ENCODE measurements at regions of chr20 and their contacts with region 1.

Region 1: DNA sequence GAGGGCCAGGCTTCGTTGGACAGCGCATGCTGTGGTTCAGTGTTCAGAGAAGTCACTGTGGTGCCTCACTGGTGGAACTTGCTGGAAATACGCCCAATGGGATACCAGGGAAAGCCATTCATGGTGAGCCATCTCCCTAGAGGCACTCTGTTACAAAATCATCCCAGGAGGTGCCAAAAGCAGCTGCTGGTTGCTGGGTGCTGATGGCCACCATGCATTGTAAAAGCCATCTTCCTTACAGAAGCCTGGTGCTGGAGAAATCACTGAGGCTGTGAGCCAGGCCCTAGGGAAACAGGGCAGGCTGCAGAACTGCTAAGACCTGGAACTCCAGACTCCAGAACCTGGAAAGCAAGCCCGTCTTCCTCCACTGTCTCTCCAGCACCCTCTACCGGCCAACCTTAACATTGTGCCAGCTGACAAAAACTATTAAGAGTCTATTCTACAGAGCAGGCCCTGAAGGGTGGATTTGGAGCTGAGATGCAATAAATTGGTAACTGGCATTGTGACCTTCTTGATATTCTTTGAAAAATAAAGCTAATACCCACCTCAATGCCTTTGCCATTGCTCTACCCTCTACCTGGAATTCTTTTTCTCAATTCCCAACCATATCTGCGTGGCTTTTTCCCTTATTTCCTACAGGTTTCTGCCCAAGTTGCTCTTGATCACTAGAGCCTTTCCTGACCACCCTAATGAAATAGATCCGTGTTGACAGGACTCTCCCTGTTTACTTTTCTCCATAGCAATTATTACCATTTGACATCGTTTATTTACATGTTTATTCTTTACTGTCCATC is 18.5 kb downstream of the SNRPB start:
- DNase-seq: peak; percentile 76 to 79 (median 78)
- ATAC-seq: peak; percentile 76
- H3K4me3 ChIP-seq: no peak overlapping the region
- H3K27ac ChIP-seq: no peak overlapping the region
- H3K4me1 ChIP-seq: no peaks in the 10 kb centered on the region
- H3K27me3 ChIP-seq: no peaks in the 10 kb centered on the region
- CTCF ChIP-seq: peak; percentile 71 to 83 (median 78)
- POLR2A ChIP-seq: no peak

Region 2: DNA sequence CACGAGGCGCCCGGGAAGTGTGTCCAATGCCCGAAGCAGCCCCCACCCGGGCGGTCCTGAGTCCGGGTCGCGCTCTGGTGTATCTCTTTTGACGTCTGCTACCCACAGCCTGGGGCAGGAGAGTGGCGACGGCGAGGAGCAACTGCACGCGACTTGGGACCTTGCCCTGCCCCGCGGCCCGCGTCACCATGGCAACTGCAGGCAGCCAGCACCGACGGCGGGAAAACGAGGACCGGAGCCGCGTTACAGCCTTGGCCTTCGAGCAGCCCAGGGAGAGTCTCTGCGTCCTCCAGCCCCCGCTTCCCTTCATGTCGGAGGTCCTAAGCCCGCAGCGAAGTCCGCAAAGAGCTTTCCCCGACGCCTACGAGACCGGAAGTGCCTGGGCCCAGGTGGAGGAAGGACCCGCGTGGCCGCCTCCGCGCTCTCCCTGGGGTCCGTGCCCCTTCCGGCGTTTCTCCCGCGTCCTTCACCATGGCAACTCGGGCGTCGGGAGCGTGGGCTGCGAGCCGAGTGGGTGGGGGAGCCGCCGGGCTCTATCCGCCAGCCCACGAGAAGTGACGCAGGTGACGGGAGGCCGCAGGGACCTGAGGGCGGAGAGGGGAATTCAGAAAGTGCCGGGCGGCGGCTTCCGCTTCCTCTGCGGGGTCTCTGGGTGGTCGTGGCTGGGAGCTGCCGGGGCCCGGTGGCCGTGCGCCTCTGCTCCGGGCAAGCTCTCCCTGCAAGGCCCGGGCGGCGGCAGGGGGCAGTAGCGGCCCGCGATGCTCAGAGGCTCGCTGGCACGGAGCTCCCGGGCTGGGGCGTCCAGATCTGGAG is 245.0 kb before region 1 on chr20:
- intact Hi-C with region 1: loop called (anchors 5 kb)
- DNase-seq: peak; percentile 76 to 89 (median 80)
- ATAC-seq: peak; percentile 91
- H3K4me3 ChIP-seq: peak overlapping the region; percentile 29 to 41
- H3K27ac ChIP-seq: peak overlapping the region in 2 of 4 donors; percentile 12 to 51
- H3K4me1 ChIP-seq: peaks cover 15% of the 10 kb centered on the region
- H3K27me3 ChIP-seq: no peaks in the 10 kb centered on the region
- CTCF ChIP-seq: peak; percentile 71 to 86 (median 84)
- POLR2A ChIP-seq: peak in 1 of 3 donors; percentile 23